Kidney (tissue), 22 donors: ENCODE measurements at regions of chr1 and their contacts with region 1.

Region 1: DNA sequence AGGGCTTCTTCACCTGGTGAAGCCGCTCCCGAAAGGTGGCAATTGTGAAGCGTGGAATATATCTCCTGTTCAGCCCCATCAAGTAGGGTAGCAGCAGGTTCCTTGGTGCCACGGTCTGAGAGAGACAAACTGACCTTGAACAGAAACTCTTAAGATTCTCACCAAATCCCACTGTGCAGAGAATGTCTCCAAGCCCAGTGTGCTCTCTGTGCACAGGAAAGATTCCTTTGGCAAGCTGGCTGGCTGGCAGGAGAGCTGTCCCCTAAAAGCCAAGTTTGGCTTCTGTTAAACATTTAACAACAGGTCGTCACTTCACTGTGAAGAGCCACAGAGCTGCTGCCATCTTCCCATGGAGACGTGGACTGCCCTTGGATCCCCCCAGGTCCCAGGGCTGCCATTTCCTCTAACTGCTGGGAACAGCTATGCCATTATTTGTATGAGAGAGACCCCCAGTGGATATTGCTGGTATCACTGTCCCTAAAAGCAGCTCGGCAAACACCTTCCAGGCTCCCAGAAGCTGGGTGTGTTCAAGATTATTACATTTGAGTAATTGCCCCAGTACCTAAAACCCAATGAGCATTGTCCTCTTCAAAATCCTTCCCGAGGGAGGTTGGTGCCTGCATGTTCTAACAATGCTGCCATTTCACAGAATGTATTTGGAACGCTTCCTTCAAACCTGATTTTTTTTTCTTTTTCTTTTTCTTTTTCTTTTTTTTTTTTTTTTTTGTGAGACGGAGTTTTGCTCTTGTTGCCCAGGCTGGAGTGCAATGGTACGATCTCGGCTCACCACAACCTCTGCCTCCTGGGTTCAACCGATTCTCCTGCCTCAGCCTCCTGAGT is 71.8 kb downstream of the CD58 start:
- DNase-seq: peak; percentile 64 to 83 (median 74)
- H3K4me3 ChIP-seq: peak overlapping the region in 1 of 3 donors; percentile 40
- H3K27ac ChIP-seq: peak overlapping the region; percentile 25 to 32
- H3K4me1 ChIP-seq: peaks cover 0 to 41% (median 18%) of the 10 kb centered on the region in 3 donors
- H3K27me3 ChIP-seq: no peaks in the 10 kb centered on the region
- CTCF ChIP-seq: peak; percentile 76

Region 2: DNA sequence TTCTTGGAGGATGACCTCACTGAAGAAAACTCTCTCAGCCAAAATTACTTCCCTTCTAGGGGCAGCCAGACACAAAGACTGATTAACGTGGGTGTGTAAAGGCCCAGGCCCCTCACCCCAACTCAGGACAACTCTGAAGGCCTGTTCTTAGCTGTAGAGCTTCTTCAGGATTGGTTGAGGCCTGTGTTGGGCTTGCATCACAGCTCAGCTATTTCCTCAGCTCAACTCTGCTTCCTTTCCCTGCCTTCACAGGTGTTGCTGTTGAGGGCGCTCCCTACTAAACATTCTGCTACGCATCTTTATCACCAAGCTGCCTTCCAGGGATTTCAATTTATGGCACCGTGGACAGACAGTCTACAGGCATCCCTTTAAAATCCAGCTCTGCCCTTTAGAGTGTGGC is 351.0 kb before region 1 on chr1:
- intact Hi-C with region 1: loop called (anchors 10 kb)
- DNase-seq: no peak
- H3K4me3 ChIP-seq: no peak overlapping the region
- H3K27ac ChIP-seq: no peak overlapping the region
- H3K4me1 ChIP-seq: peaks cover 0 to 9% (median 7%) of the 10 kb centered on the region in 3 donors
- H3K27me3 ChIP-seq: no peaks in the 10 kb centered on the region
- CTCF ChIP-seq: no peak

Region 3: DNA sequence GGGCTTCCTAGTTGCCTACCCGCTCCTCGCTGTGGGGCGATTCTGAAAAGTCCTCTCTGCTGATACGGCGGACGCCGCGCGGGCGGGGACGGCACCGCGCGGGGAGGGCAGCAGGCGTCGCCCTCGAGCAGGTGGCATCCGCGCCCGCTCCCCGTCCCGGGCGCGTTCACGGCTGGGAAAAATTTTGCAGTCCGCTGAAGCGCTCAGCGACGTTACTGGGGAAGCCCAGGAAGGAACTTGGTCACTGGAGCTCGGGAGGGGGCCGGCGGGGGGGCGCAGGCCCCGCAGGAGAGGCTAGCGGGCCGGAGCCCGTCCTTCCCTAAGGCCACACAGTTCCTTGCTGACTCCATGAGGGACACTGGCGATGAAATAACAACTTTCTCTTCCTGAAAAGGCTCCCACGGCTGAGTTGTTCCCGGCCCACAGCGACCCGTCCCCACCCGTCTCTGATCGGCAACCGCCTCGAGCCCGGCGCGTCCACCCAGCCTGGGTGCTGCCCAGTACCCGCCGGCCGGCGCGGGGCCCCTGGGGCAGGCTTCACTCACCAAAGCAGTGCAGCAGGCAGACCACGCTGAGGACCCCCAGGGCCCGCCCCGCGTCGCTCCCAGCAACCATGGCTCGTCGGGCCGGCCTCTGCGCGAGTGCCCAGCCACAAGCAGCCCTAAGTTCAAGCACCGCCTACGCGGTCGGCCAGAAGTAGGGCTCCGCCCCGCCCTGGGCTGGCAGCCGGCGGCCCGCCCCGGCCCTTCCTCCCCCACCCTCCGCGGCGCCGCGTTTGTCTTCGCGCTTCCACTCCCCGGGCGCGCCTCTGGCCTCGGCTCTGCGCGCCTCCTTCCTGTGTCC is 71.6 kb after region 1 on chr1 and contains the start of gene CD58:
- intact Hi-C with region 1: no loop called
- DNase-seq: peak; percentile 87 to 96 (median 91)
- H3K4me3 ChIP-seq: peak within 1 kb of the TSS; percentile 65 to 94 (median 73)
- H3K27ac ChIP-seq: peak within 1 kb of the TSS; percentile 93 to 94
- H3K4me1 ChIP-seq: peaks cover 0 to 12% (median 4%) of the 10 kb centered on the region in 3 donors
- H3K27me3 ChIP-seq: no peaks in the 10 kb centered on the region
- CTCF ChIP-seq: peak; percentile 59
- total RNA-seq, gene CD58: 36.6 TPM